ENCODE measurements at regions of chr16 and their contacts with region 1.

Region 1: GRCh38 chr16:58198022-58198683 is at the start of gene CSNK2A2:
- DNase-seq: peak; percentile 38 to 81 (median 60)
- ATAC-seq: peak; percentile 99
- H3K4me3 ChIP-seq: peak within 1 kb of the TSS; percentile 63
- H3K4me3 Mint-ChIP-seq: peak within 1 kb of the TSS; percentile 84 to 93 (median 88)
- H3K27ac ChIP-seq: peak within 1 kb of the TSS; percentile 62
- H3K27ac Mint-ChIP-seq: peak within 1 kb of the TSS; percentile 61 to 90 (median 82)
- H3K4me1 ChIP-seq: peaks cover 21 to 22% of the 10 kb centered on the region in 2 donors
- H3K4me1 Mint-ChIP-seq: peaks cover 30 to 51% (median 46%) of the 10 kb centered on the region in 7 donors
- H3K27me3 ChIP-seq: no peaks in the 10 kb centered on the region
- H3K27me3 Mint-ChIP-seq: peaks cover 9 to 33% (median 13%) of the 10 kb centered on the region in 5 donors
- total RNA-seq, gene CSNK2A2: 46.5 to 70.0 (median 67.9) TPM

Region 2: DNA sequence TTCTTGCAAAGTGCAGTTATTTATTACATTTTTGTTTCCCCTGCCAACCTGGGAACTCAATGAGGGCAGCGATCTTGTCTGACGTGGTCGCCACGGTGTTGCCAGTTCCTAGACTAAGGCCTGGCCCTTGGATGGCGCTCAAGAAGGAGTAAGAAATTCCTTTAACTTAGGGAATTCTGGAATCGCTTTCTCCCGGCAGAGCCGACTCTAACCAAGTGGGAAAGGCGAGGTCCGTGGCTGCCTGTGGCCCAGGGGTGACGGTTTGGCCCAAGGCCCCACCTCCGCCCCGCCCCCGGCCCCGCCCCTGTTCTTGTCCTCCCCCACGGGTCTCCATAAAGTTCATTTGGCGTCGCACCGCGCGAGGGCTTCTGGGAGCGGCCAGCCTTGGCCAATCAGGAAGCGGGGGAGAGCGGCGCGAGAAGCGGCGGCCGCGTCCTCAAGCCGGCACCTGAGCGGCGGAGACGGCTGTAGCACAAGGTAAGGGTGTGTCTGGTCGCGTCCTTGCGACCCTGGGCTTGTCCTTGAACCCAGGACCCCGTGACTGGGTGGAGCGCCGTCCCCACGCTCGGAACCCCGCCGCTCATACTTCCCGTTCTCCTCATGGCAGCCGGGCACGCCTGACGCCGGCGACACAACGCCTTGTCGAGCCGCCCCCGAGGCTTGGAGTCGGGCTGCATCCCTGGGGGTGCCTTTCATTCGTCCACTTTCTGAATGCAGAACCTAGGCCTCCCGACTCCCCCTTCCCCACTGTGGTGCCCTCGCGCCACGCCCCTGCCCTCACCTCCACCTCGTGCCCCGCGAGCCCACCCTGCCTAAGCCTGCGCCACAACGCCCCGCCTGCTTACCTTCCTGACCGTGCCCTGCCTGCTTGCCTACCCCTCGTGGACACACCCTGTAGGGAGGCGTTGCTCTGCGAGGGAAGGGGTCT is 1468.2 kb before region 1 on chr16 and contains the start of gene NUP93:
- CTCF ChIA-PET with region 1: no interaction called
- POLR2A ChIA-PET with region 1: no interaction called
- intact Hi-C with region 1: loop called in 1 of 2 experiments (anchors 10 kb)
- DNase-seq: peak; percentile 76 to 90 (median 88)
- ATAC-seq: peak; percentile 99
- H3K4me3 ChIP-seq: peak within 1 kb of the TSS; percentile 82
- H3K4me3 Mint-ChIP-seq: peak within 1 kb of the TSS in 1 of 10 donors; percentile 90
- H3K27ac ChIP-seq: peak within 1 kb of the TSS; percentile 84
- H3K27ac Mint-ChIP-seq: peak within 1 kb of the TSS in 7 of 9 donors; percentile 82 to 98 (median 94)
- H3K4me1 ChIP-seq: peaks cover 22 to 23% of the 10 kb centered on the region in 2 donors
- H3K4me1 Mint-ChIP-seq: peaks cover 10 to 31% (median 26%) of the 10 kb centered on the region in 7 donors
- H3K27me3 ChIP-seq: no peaks in the 10 kb centered on the region
- H3K27me3 Mint-ChIP-seq: no peaks in the 10 kb centered on the region
- total RNA-seq, gene NUP93: 53.0 to 90.5 (median 58.3) TPM

Region 3: DNA sequence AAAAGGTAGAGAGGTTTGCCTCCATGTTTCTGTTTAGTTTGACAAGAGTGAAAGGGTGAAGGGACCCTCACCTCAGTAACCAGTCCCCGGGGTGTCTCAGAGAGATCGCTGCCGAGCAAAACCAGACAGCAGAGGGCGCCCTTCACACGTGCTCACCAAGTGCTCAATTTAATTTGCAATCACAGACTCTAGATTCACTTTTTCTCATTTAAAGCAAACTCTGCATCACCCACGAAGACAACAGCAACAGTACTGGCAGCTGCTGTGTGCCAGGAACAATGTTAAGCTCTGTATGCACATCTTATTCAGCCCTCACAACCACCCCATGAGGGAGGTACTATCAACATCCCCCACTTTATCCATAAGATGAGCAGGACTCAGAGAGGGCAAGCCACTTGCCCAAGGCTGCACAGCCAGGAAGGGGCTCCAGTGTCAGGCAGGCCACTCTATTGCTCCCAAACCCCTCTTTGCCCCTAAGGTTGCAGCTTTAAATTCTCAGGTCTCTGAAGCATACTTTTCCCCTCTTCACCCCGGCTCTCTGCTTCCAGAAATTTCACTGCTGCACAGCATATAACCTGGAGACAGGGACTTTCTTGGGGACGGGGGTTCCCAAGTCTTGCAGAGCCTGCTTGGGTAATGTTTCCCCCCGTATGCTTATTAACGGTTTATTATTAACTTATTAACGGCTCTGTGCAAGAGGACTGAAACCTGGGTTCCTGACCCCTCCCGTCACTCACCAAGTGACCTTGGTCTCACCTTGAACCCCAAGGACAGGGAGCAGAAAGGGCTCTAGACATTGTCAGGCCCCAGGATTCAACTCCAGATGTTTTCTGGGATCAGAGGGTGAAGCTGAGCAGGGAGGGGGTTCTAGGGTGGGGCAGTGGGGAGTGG is 298.1 kb before region 1 on chr16:
- CTCF ChIA-PET with region 1: no interaction called
- POLR2A ChIA-PET with region 1: no interaction called
- intact Hi-C with region 1: loop called in 1 of 2 experiments (anchors 1 kb)
- DNase-seq: peak; percentile 55 to 81 (median 71)
- ATAC-seq: peak; percentile 86
- H3K4me3 ChIP-seq: no peak overlapping the region
- H3K4me3 Mint-ChIP-seq: no peak overlapping the region
- H3K27ac ChIP-seq: no peak overlapping the region
- H3K27ac Mint-ChIP-seq: peak overlapping the region in 1 of 9 donors; percentile 1
- H3K4me1 ChIP-seq: no peaks in the 10 kb centered on the region
- H3K4me1 Mint-ChIP-seq: peaks cover under 1 to 6% (median 3%) of the 10 kb centered on the region in 7 donors
- H3K27me3 ChIP-seq: no peaks in the 10 kb centered on the region
- H3K27me3 Mint-ChIP-seq: peaks cover 4 to 11% (median 8%) of the 10 kb centered on the region in 5 donors

Region 4: DNA sequence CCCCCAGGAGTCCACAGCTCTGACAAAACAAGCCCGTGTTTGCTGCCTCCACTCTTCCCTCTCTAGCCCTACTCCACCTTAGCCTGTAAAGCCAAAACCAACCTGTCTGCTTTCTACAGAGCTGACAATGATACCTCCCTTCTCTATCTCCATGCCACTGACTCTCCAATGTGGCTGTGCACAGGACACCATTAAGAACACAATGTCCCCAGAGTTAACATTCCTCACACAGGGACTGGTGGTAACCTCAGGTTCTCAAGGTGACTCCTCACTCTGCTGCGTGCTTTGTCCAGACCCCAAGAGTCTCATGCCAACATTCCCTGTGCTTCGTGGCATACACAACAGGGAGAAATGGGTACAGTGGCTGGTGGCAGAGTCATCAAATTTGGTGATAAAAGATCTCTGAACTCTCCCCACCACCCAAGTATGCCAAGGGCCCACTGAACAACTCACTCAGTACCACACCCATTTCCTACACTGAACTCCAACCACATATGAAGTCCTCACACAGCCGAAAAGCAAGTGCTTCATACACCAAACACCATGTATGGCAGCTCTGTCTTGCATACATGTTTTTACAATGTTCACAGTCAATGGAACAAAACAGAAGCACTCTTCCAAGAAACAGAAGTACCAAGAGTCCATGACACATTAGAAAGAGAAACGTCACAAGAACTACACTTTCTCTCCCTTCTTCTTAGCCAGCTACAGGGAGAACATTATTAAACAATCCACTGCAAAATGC is 21.4 kb before region 1 on chr16:
- CTCF ChIA-PET with region 1: no interaction called
- POLR2A ChIA-PET with region 1: no interaction called
- intact Hi-C with region 1: loop called in 1 of 2 experiments (anchors 2 kb)
- DNase-seq: peak in 6 of 9 donors; percentile 26 to 61 (median 43)
- ATAC-seq: peak; percentile 83
- H3K4me3 ChIP-seq: peak overlapping the region; percentile 13
- H3K4me3 Mint-ChIP-seq: peak overlapping the region; percentile 23 to 71 (median 62)
- H3K27ac ChIP-seq: peak overlapping the region; percentile 52
- H3K27ac Mint-ChIP-seq: peak overlapping the region; percentile 78 to 94 (median 88)
- H3K4me1 ChIP-seq: peaks cover 16 to 32% of the 10 kb centered on the region in 2 donors
- H3K4me1 Mint-ChIP-seq: peaks cover 25 to 60% (median 44%) of the 10 kb centered on the region in 7 donors
- H3K27me3 ChIP-seq: no peaks in the 10 kb centered on the region
- H3K27me3 Mint-ChIP-seq: no peaks in the 10 kb centered on the region

Region 5: DNA sequence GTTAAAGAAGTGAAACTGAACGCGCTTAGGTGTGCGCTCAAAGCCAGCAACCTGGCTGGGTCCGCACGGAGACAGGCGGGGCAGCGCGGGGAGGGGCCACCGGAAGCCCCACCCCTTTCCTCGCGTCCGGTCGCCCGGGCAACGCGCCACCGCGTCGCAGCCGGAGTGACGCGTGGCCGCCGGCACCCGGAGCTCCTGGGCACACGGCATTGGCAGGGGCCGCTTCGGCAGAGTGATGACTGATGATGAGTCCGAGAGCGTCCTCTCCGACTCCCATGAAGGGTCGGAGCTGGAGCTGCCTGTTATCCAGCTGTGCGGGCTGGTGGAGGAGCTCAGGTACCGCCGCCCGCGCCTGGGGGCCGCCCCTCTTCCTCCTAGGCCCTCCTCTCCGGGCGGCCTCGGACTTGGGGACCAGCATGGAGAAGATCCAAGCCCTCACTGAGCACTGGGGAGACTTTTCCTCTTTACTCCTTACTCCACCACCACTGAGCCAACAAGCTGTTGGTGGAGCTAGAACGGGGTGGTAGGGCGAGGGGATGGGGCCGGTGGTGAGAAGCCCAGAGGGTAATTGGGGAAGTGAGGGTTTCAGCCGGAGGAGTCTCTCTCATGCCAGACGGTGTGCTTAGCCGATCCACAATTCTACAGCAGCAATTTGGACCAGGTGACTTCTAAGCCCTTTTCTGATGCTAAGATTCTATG is 51.8 kb after region 1 on chr16:
- CTCF ChIA-PET with region 1: interaction called, 3 read pairs
- POLR2A ChIA-PET with region 1: interaction called, 3 read pairs
- intact Hi-C with region 1: loop called (anchors 1 kb)
- DNase-seq: peak; percentile 74 to 91 (median 86)
- ATAC-seq: peak; percentile 98
- H3K4me3 ChIP-seq: peak overlapping the region; percentile 77
- H3K4me3 Mint-ChIP-seq: peak overlapping the region; percentile 77 to 87 (median 82)
- H3K27ac ChIP-seq: peak overlapping the region; percentile 43
- H3K27ac Mint-ChIP-seq: peak overlapping the region in 8 of 9 donors; percentile 31 to 86 (median 67)
- H3K4me1 ChIP-seq: peaks cover 5 to 7% of the 10 kb centered on the region in 2 donors
- H3K4me1 Mint-ChIP-seq: peaks cover 6 to 13% (median 12%) of the 10 kb centered on the region in 7 donors
- H3K27me3 ChIP-seq: no peaks in the 10 kb centered on the region
- H3K27me3 Mint-ChIP-seq: peaks cover 0 to 17% (median under 1%) of the 10 kb centered on the region in 5 donors

Region 6: GRCh38 chr16:58733671-58734458 is 535.7 kb after region 1 on chr16 and contains the start of gene GOT2:
- CTCF ChIA-PET with region 1: no interaction called
- POLR2A ChIA-PET with region 1: no interaction called
- intact Hi-C with region 1: loop called in 1 of 2 experiments (anchors 2 kb)
- DNase-seq: peak; percentile 61 to 87 (median 77)
- ATAC-seq: peak; percentile 99
- H3K4me3 ChIP-seq: peak within 1 kb of the TSS; percentile 83
- H3K4me3 Mint-ChIP-seq: peak within 1 kb of the TSS; percentile 93 to 99 (median 98)
- H3K27ac ChIP-seq: peak within 1 kb of the TSS; percentile 79
- H3K27ac Mint-ChIP-seq: peak within 1 kb of the TSS; percentile 31 to 95 (median 91)
- H3K4me1 ChIP-seq: peaks cover 9 to 15% of the 10 kb centered on the region in 2 donors
- H3K4me1 Mint-ChIP-seq: peaks cover 16 to 50% (median 42%) of the 10 kb centered on the region in 7 donors
- H3K27me3 ChIP-seq: no peaks in the 10 kb centered on the region
- H3K27me3 Mint-ChIP-seq: peaks cover 0 to 3% (median 0%) of the 10 kb centered on the region in 5 donors
- total RNA-seq, gene GOT2: 24.3 to 76.6 (median 38.0) TPM